ENCODE measurements at regions of chr15 and their contacts with region 1.

Region 1: DNA sequence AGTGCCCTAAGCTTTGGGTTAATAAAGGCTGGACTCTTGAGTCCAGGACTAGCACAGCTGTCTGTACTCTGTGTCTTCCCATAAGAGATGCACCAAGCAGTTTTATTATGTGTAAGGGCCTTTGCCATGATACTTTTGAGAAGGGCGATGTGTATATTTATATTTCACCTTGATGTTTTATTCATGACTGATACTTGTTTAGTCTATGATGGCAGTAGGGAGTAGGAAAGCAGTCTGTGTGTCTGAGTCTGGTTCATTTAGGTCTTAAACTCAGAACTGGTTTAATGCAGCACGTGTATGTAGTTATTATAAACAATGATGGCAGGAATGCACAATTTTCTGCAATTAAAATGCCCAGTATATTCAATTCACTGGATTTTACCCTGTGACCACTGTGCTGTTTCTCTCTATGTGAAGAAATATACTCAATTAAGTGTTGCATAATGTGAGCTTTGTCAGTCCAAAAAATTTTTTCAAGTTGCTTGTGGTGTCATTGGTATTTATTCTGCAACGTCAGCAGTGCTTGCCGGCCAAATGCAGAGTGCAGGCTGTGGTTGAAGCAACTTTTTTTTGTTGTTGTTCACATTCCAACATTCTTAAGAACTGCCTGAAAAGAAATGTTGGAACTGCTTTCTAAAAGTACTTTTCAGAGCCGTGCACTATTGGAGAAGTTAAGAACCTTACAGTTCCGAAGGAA is 423.7 kb upstream of the SEMA6D start:
- DNase-seq: peak; percentile 68
- H3K4me3 Mint-ChIP-seq: peak overlapping the region; percentile 58
- H3K27ac Mint-ChIP-seq: peak overlapping the region; percentile 71
- H3K4me1 Mint-ChIP-seq: peaks cover 27% of the 10 kb centered on the region
- H3K27me3 Mint-ChIP-seq: no peaks in the 10 kb centered on the region
- CTCF ChIP-seq: no peak

Region 2: GRCh38 chr15:47431501-47431900 is 137.9 kb after region 1 on chr15:
- CTCF ChIA-PET with region 1: no interaction called
- POLR2A ChIA-PET with region 1: interaction called, 3 read pairs
- intact Hi-C with region 1: loop called (anchors 10 kb)
- DNase-seq: no peak
- H3K4me3 Mint-ChIP-seq: no peak overlapping the region
- H3K27ac Mint-ChIP-seq: no peak overlapping the region
- H3K4me1 Mint-ChIP-seq: no peaks in the 10 kb centered on the region
- H3K27me3 Mint-ChIP-seq: no peaks in the 10 kb centered on the region
- CTCF ChIP-seq: no peak